ENCODE measurements at regions of chr22 and their contacts with region 1.

Region 1: GRCh38 chr22:21938071-21938822 is 14.4 kb downstream of the PPM1F start:
- DNase-seq: peak; percentile 52
- H3K4me3 ChIP-seq: peak overlapping the region; percentile 38 to 68 (median 59)
- H3K27ac ChIP-seq: peak overlapping the region; percentile 92 to 96 (median 96)
- H3K4me1 ChIP-seq: peaks cover 47 to 81% (median 68%) of the 10 kb centered on the region in 3 donors
- H3K27me3 ChIP-seq: no peaks in the 10 kb centered on the region
- CTCF ChIP-seq: peak; percentile 97 to 100 (median 100)
- POLR2A ChIP-seq: peak in 1 of 4 donors; percentile 37

Region 2: DNA sequence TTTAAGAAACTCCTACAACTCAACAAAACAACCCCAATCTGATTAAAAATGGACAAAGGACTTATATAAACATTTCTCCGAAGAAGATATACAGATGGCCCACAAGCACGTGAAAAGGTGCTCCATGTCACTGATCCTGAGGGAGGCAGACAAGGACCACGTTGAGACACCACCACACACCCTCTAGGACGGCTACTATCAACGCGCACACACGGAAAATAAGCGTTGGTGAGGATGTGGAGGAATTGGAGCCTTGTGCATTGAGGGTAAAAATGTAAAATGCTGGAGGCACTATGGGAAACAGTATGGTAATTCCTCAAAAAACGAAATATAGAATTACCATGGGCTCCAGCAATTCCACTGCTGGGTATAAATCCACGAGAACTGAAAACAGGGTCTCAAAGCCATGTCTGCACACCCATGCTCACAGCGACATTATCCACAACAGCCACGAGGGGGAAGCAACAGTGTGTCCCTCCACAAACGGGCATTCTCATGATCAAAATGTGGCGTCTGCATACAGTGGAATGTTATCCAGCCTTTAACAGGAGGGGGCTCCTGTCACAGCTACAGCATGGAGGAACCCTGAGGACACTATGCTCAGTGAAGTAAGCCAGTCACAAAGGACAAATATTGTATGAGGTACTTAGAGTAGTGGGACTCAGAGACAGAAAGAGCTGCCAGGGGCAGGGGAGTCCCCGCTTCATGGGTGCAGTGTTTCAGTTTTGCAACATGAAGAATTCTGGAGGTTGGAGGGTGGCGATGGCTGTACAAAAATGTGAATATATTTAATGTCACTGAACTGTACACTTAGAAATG is 225.1 kb before region 1 on chr22:
- intact Hi-C with region 1: loop called (anchors 5 kb)
- DNase-seq: no peak
- H3K4me3 ChIP-seq: peak overlapping the region in 1 of 4 donors; percentile 6
- H3K27ac ChIP-seq: no peak overlapping the region
- H3K4me1 ChIP-seq: peaks cover 0 to 18% (median 3%) of the 10 kb centered on the region in 3 donors
- H3K27me3 ChIP-seq: no peaks in the 10 kb centered on the region
- CTCF ChIP-seq: peak; percentile 60 to 77 (median 68)
- POLR2A ChIP-seq: no peak

Region 3: GRCh38 chr22:21902296-21903087 is 35.8 kb before region 1 on chr22:
- intact Hi-C with region 1: no loop called
- DNase-seq: no peak
- H3K4me3 ChIP-seq: no peak overlapping the region
- H3K27ac ChIP-seq: no peak overlapping the region
- H3K4me1 ChIP-seq: no peaks in the 10 kb centered on the region
- H3K27me3 ChIP-seq: no peaks in the 10 kb centered on the region
- CTCF ChIP-seq: no peak
- POLR2A ChIP-seq: no peak